Heart right ventricle (tissue), 16 donors: ENCODE measurements at regions of chr5 and their contacts with region 1.

Region 1: DNA sequence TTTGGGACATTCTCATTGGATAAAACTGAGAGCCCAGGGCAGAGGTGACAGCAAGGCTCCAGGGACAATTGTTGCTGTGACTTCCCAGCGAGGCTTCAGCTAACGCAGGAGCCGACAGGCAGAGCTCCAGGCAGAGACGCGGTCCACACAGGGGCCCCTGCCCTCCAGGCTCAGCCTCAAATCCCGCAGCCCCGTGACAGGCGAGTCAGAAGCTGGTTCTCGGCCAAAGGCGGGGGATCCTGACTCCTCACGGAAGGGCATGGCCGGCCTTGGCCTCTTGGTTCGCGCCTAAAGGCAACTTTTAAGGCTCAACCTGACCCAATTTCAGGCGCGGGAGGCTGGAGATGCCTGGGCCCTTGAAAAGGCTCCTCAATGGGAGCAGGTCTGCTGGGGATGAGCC is 21.3 kb downstream of the SLC12A7 start:
- DNase-seq: peak; percentile 66 to 70
- ATAC-seq: peak; percentile 5 to 72 (median 48)
- H3K4me3 ChIP-seq: no peak overlapping the region
- H3K27ac ChIP-seq: peak overlapping the region in 9 of 10 donors; percentile 59 to 77 (median 70)
- H3K4me1 ChIP-seq: peaks cover 17 to 68% (median 26%) of the 10 kb centered on the region in 9 donors
- H3K27me3 ChIP-seq: no peaks in the 10 kb centered on the region
- CTCF ChIP-seq: no peak

Region 2: GRCh38 chr5:1058083-1058945 is 32.2 kb before region 1 on chr5:
- intact Hi-C with region 1: loop called in 1 of 10 experiments (anchors 5 kb)
- DNase-seq: peak in 1 of 2 donors; percentile 12
- ATAC-seq: no peak
- H3K4me3 ChIP-seq: no peak overlapping the region
- H3K27ac ChIP-seq: no peak overlapping the region
- H3K4me1 ChIP-seq: peaks cover 0 to 11% (median 6%) of the 10 kb centered on the region in 9 donors
- H3K27me3 ChIP-seq: no peaks in the 10 kb centered on the region
- CTCF ChIP-seq: no peak

Region 3: GRCh38 chr5:1068204-1068894 is 22.2 kb before region 1 on chr5:
- intact Hi-C with region 1: loop called in 1 of 10 experiments (anchors 2 kb)
- DNase-seq: peak in 1 of 2 donors; percentile 71
- ATAC-seq: peak; percentile 85 to 97 (median 90)
- H3K4me3 ChIP-seq: no peak overlapping the region
- H3K27ac ChIP-seq: peak overlapping the region in 4 of 10 donors; percentile 8 to 48 (median 27)
- H3K4me1 ChIP-seq: peaks cover 0 to 28% (median 10%) of the 10 kb centered on the region in 9 donors
- H3K27me3 ChIP-seq: no peaks in the 10 kb centered on the region
- CTCF ChIP-seq: no peak

Region 4: GRCh38 chr5:1125030-1125357 is 34.5 kb after region 1 on chr5:
- intact Hi-C with region 1: loop called in 2 of 10 experiments (anchors 5 kb)
- DNase-seq: peak; percentile 67 to 87
- ATAC-seq: peak; percentile 40 to 79 (median 65)
- H3K4me3 ChIP-seq: peak overlapping the region in 2 of 10 donors; percentile 15 to 19
- H3K27ac ChIP-seq: peak overlapping the region; percentile 61 to 93 (median 88)
- H3K4me1 ChIP-seq: peaks cover 30 to 98% (median 61%) of the 10 kb centered on the region in 9 donors
- H3K27me3 ChIP-seq: no peaks in the 10 kb centered on the region
- CTCF ChIP-seq: no peak

Region 5: GRCh38 chr5:1134478-1134877 is 43.9 kb after region 1 on chr5:
- intact Hi-C with region 1: loop called in 4 of 10 experiments (anchors 5 kb)
- DNase-seq: peak in 1 of 2 donors; percentile 4
- ATAC-seq: no peak
- H3K4me3 ChIP-seq: no peak overlapping the region
- H3K27ac ChIP-seq: peak overlapping the region in 3 of 10 donors; percentile 60 to 70 (median 62)
- H3K4me1 ChIP-seq: peaks cover 9 to 64% (median 30%) of the 10 kb centered on the region in 9 donors
- H3K27me3 ChIP-seq: no peaks in the 10 kb centered on the region
- CTCF ChIP-seq: peak in 4 of 9 donors; percentile 20 to 32 (median 27)